Heart right ventricle (tissue), 16 donors: ENCODE measurements at regions of chr2 and their contacts with region 1.

Region 1: DNA sequence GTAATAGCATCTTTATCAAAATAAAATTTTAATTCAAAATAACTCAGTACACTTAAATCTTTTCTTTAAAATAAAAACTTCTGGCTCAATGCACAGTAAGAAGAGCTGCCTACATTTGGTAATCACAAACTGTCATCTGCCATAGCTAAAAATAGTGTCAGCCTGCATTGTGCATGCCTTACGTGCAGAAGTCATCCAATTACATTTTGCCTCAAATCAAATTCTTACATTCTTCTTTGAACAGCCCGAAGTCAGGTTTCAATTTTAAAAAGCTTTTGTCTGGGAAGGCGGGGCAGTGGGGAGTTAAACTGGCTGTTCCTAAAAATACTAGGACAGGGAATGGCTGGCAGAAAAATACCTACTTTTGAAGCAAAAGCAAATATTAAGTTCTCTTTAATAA is 51.1 kb downstream of the RTN4 start:
- DNase-seq: no peak
- ATAC-seq: peak in 5 of 8 donors; percentile 25 to 61 (median 49)
- H3K4me3 ChIP-seq: peak overlapping the region in 5 of 10 donors; percentile 11 to 32 (median 22)
- H3K27ac ChIP-seq: peak overlapping the region in 1 of 10 donors; percentile 17
- H3K4me1 ChIP-seq: peaks cover 0 to 74% (median 33%) of the 10 kb centered on the region in 9 donors
- H3K27me3 ChIP-seq: no peaks in the 10 kb centered on the region
- CTCF ChIP-seq: no peak

Region 2: DNA sequence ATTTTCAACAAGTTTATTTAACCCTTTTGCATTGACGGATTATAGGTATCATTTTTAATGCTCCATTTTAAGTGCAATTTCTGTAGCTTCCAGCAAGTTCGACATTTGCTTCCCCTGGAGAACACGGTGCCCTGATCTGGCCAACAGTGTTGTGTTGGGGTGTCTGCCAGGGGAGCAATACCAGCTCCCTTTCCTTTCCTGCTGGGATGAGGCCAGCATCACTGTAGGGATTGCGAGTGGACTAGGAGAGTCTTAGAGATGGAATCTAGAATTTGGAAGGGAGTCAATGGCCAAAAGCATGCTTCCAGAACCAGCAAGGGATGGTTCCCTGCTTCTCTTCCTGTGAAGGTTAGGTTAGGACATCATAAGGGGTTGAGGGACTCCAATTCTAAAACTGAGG is 84.1 kb before region 1 on chr2:
- intact Hi-C with region 1: loop called in 1 of 10 experiments (anchors 10 kb)
- DNase-seq: no peak
- ATAC-seq: no peak
- H3K4me3 ChIP-seq: no peak overlapping the region
- H3K27ac ChIP-seq: no peak overlapping the region
- H3K4me1 ChIP-seq: no peaks in the 10 kb centered on the region
- H3K27me3 ChIP-seq: peaks cover 0 to 3% (median 0%) of the 10 kb centered on the region in 7 donors
- CTCF ChIP-seq: no peak